GM10248 (cell line): ENCODE measurements at regions of chr5 and their contacts with region 1.

Region 1: GRCh38 chr5:36507332-36507952 is 99.0 kb upstream of the SLC1A3 start:
- DNase-seq: peak; percentile 65
- CTCF ChIP-seq: peak; percentile 85

Region 2: GRCh38 chr5:36272136-36272690 is 235.2 kb before region 1 on chr5:
- CTCF ChIA-PET with region 1: interaction called, 18 read pairs
- POLR2A ChIA-PET with region 1: no interaction called
- DNase-seq: no peak
- CTCF ChIP-seq: no peak

Region 3: GRCh38 chr5:36414869-36415282 is 92.6 kb before region 1 on chr5:
- CTCF ChIA-PET with region 1: interaction called, 30 read pairs
- POLR2A ChIA-PET with region 1: no interaction called
- DNase-seq: no peak
- CTCF ChIP-seq: peak; percentile 16

Region 4: DNA sequence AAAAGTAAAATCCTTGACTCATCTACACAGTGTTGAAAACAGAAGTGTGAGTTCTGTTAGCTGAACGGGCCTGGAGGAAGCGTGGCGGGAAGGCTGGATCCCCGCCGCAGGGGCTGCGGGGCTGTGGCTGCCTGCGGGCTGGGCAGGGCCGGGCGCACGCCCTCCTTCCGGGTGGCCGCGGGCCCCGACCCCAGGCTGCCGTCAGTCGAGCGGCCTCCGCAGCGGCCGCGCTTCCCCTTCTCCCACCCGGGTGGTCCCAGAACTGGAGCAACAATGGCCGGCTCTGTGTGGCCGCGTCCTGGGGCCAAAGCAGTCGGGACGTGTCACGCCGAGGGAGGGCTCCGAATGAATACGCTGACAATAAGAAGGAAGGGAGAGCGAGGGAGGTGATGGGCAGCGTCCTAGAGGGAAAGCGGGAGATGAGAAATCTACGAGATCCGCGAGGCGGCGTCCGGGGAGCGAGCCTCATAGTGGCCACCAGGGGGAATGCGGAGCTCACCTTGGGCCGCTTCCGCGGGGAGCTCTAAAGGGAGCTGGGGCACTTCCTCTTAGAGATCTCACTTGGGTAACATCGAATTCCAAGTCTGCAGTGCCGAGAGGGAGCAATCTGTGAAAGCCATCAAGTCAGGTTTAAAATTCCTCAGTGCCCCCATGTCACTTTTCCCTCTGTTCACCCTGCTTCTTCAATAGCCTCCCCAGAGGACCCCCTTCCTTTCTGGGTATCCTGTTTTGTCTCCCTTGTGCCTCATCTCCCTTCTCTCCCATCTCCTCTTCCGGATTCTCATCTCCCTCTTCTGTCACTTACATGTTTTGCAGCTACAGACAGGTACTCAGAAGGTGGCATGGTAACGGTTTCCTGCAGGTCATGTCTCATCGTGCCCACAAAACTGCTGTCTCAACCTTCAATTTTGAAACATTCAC is 182.9 kb after region 1 on chr5:
- CTCF ChIA-PET with region 1: interaction called, 12 read pairs
- POLR2A ChIA-PET with region 1: no interaction called
- DNase-seq: peak; percentile 86
- CTCF ChIP-seq: peak; percentile 83